ENCODE measurements at regions of chr3 and their contacts with region 1.

Region 1: DNA sequence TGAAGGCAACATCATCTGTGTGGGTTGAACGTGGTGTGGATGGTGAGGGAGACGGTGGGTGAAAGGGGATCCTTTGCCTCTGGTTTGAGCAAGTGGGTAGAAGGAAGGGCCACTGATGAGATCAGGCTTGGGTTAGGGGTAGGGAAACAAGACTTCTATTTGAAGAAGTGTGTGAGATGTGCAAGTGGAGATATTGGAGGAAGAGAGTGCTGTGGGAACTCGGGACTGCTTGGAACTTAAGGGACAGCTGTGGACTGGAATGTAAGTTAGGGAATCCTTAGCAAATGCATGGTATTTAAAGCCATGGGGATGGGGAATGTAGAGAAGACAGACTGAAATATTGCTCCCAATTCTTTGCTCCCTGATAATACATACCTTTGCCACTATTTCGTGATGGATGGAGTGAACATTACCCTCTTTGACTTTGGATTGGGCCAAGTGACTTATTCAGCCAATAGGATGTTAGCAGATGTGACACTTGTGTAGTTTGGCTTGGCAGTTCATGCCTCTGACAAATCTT is 30.2 kb upstream of the AMOTL2 start:
- DNase-seq: no peak
- H3K4me3 ChIP-seq: no peak overlapping the region
- H3K27ac ChIP-seq: no peak overlapping the region
- H3K4me1 ChIP-seq: peaks cover 9 to 21% (median 14%) of the 10 kb centered on the region in 4 donors
- H3K27me3 ChIP-seq: peaks cover 0 to 28% (median 0%) of the 10 kb centered on the region in 4 donors
- CTCF ChIP-seq: no peak
- EP300 ChIP-seq: no peak
- POLR2A ChIP-seq: no peak

Region 2: GRCh38 chr3:133763797-133764683 is 640.4 kb before region 1 on chr3:
- intact Hi-C with region 1: no loop called
- DNase-seq: no peak
- H3K4me3 ChIP-seq: no peak overlapping the region
- H3K27ac ChIP-seq: no peak overlapping the region
- H3K4me1 ChIP-seq: peaks cover 0 to 12% (median 3%) of the 10 kb centered on the region in 4 donors
- H3K27me3 ChIP-seq: no peaks in the 10 kb centered on the region
- CTCF ChIP-seq: no peak
- EP300 ChIP-seq: no peak
- POLR2A ChIP-seq: no peak

Region 3: GRCh38 chr3:134449277-134449676 is 44.9 kb after region 1 on chr3:
- intact Hi-C with region 1: loop called (anchors 5 kb)
- DNase-seq: peak; percentile 79
- H3K4me3 ChIP-seq: no peak overlapping the region
- H3K27ac ChIP-seq: no peak overlapping the region
- H3K4me1 ChIP-seq: peaks cover 10 to 24% (median 17%) of the 10 kb centered on the region in 4 donors
- H3K27me3 ChIP-seq: no peaks in the 10 kb centered on the region
- CTCF ChIP-seq: peak in 2 of 3 experiments; percentile 20 to 47
- EP300 ChIP-seq: no peak
- POLR2A ChIP-seq: no peak

Region 4: GRCh38 chr3:134485718-134486576 is 81.5 kb after region 1 on chr3 and contains the starts of genes ANAPC13 and CEP63:
- intact Hi-C with region 1: no loop called
- DNase-seq: peak; percentile 99
- H3K4me3 ChIP-seq: peak within 1 kb of the TSS; percentile 82 to 91 (median 91)
- H3K27ac ChIP-seq: peak within 1 kb of the TSS; percentile 93 to 97 (median 97)
- H3K4me1 ChIP-seq: peaks cover 35 to 54% (median 44%) of the 10 kb centered on the region in 4 donors
- H3K27me3 ChIP-seq: no peaks in the 10 kb centered on the region
- CTCF ChIP-seq: no peak
- EP300 ChIP-seq: no peak
- POLR2A ChIP-seq: peak; percentile 73
- total RNA-seq, gene ANAPC13: 32.5 to 78.9 (median 49.4) TPM
- total RNA-seq, gene CEP63: 16.7 to 26.2 (median 22.6) TPM